Endothelial cell of umbilical vein (primary cell): ENCODE measurements at regions of chr22 and their contacts with region 1.

Region 1: GRCh38 chr22:30386960-30387827 is at the start of gene RNF215:
- DNase-seq: peak; percentile 78
- H3K4me3 ChIP-seq: peak within 1 kb of the TSS; percentile 36 to 70 (median 43)
- H3K27ac ChIP-seq: peak within 1 kb of the TSS; percentile 20
- H3K4me1 ChIP-seq: peaks cover 15% of the 10 kb centered on the region
- H3K27me3 ChIP-seq: no peaks in the 10 kb centered on the region
- CTCF ChIP-seq: peak; percentile 90 to 91
- POLR2A ChIP-seq: no peak
- total RNA-seq, gene RNF215: 24.4 and 26.9 TPM in 2 replicates

Region 2: DNA sequence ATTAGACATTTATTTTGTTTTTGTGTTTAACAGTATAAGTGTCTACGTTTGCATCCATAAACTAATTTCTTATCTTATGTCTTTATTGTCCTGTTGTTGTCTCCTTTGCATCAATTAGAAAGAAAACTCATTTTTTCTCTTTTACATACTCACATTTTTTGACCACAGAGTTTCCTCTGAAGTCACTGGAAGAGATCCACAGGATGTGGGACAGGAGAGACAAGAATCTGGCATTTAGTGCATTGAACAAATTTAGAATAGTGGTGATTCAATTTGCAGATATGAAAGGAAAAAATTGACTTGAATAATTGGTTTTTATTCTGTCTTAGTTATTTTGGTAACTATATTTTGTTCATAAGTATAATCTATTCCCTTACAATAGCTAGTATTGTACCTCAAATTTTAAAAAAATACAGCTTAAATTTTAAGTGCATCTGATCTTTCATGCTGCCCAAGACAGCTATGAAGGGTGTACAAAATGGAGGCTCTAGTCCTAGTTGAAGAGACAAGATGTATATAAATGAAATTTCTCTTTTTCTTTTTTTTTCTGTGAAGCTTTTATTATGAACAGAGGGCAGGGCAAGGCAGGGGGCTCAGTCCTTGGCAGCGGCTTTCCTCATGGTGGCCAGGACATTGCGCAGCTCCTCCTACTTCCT is 282.6 kb before region 1 on chr22:
- CTCF ChIA-PET with region 1: interaction called, 9 read pairs
- POLR2A ChIA-PET with region 1: no interaction called
- dilution Hi-C with region 1: no loop called
- intact Hi-C with region 1: loop called (anchors 2 kb)
- DNase-seq: no peak
- H3K4me3 ChIP-seq: no peak overlapping the region
- H3K27ac ChIP-seq: no peak overlapping the region
- H3K4me1 ChIP-seq: no peaks in the 10 kb centered on the region
- H3K27me3 ChIP-seq: peaks cover 10 to 44% of the 10 kb centered on the region in 2 experiments
- CTCF ChIP-seq: no peak
- POLR2A ChIP-seq: no peak

Region 3: GRCh38 chr22:30167296-30167695 is 219.9 kb before region 1 on chr22:
- CTCF ChIA-PET with region 1: no interaction called
- POLR2A ChIA-PET with region 1: no interaction called
- dilution Hi-C with region 1: no loop called
- intact Hi-C with region 1: no loop called
- DNase-seq: no peak
- H3K4me3 ChIP-seq: no peak overlapping the region
- H3K27ac ChIP-seq: no peak overlapping the region
- H3K4me1 ChIP-seq: no peaks in the 10 kb centered on the region
- H3K27me3 ChIP-seq: peaks cover 38 to 70% of the 10 kb centered on the region in 2 experiments
- CTCF ChIP-seq: no peak
- POLR2A ChIP-seq: no peak

Region 4: DNA sequence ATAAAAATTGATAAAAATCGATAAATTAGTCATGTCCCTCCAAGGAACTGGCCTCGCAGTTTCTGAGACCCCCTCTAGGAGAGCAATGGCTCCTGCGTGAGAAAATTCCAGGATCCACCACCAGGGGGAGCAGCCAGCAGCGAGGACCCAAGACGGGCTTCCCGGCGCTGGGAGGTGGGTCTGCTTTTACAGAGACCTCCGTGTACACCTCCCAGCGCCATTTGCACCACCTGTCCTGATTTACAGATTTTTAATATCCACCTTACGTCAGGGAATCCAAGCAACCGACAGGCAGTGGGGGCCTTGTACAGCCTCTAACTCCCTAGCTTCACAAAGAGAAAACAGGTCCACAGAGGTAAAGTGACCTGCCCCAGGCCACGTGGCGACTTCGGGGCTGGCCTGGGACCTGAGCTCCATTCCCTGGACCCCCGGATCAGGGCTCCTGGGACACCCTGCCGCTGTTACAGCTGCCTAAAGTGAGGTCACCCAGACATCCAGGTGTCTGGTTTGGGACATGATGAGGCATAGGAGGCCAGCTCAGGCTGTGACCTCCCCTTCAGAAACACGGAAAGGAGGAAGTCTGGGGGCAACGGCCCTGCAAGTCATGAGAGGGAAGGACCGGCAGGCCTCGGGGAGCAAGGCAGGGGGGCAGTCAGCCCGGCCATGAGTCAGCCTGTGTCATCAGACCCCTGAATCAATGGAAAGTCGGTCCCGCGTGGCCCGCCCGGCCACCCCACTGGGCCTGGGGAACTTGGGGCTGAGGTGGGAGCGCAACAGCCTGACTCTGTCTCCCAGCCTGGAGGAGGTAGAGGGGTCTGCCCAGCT is 124.1 kb before region 1 on chr22:
- CTCF ChIA-PET with region 1: interaction called, 56 read pairs
- POLR2A ChIA-PET with region 1: no interaction called
- dilution Hi-C with region 1: no loop called
- intact Hi-C with region 1: loop called (anchors 1 kb)
- DNase-seq: peak; percentile 57
- H3K4me3 ChIP-seq: no peak overlapping the region
- H3K27ac ChIP-seq: no peak overlapping the region
- H3K4me1 ChIP-seq: peaks cover 6% of the 10 kb centered on the region
- H3K27me3 ChIP-seq: no peaks in the 10 kb centered on the region
- CTCF ChIP-seq: peak; percentile 82 to 93
- POLR2A ChIP-seq: no peak

Region 5: GRCh38 chr22:30356449-30357235 is 30.6 kb before region 1 on chr22 and contains the starts of genes CCDC157 and SF3A1:
- CTCF ChIA-PET with region 1: interaction called, 15 read pairs
- POLR2A ChIA-PET with region 1: interaction called, 4 read pairs
- dilution Hi-C with region 1: no loop called
- intact Hi-C with region 1: no loop called
- DNase-seq: peak; percentile 95
- H3K4me3 ChIP-seq: peak within 1 kb of the TSS; percentile 64 to 94 (median 84)
- H3K27ac ChIP-seq: peak within 1 kb of the TSS; percentile 81
- H3K4me1 ChIP-seq: peaks cover 15% of the 10 kb centered on the region
- H3K27me3 ChIP-seq: no peaks in the 10 kb centered on the region
- CTCF ChIP-seq: no peak
- POLR2A ChIP-seq: peak; percentile 94
- total RNA-seq, gene CCDC157: 1.7 and 2.1 TPM in 2 replicates
- total RNA-seq, gene SF3A1: 173 and 187 TPM in 2 replicates

Region 6: DNA sequence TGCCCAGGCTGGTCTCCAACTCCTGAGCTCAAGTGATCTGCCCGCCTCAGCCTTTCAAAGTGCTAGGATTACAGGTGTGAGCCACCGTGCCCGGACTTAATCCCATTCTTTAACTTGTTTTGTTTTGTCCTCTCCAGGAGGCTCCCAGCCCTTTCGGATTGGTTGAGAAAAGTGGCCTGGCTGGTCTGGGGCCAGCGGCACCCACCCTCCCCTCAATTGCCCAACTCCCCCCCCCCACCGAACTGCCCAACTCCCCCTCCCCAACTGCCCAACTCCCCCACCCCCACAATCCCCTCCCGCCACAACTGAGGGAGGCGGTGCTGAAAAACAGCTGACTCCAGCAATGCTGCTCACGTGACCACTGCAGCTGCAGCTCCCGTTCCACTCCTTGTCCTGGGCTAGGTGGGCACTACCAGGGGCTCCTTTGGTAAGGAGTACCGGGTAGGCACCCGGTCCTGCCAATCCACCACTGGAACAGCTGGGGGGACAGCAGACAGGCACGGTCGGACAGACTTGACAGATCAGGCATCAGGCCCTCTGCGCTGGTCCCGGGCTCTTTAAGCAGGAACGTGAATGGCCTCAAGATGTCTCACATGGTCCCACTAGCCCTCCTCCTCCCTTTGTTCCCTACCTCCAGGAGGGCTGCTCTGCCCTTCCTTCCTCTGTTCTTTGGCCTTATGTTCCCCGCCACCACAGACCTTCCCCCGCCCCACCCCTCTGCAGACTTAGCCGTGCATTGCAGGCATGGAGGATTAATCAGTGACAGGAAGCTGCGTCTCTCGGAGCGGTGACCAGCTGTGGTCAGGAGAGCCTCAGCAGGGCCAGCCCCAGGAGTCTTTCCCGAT is 219.5 kb after region 1 on chr22 and contains the start of gene TCN2:
- CTCF ChIA-PET with region 1: interaction called, 6 read pairs
- POLR2A ChIA-PET with region 1: no interaction called
- dilution Hi-C with region 1: no loop called
- intact Hi-C with region 1: loop called (anchors 5 kb)
- DNase-seq: peak; percentile 83
- H3K4me3 ChIP-seq: peak within 1 kb of the TSS; percentile 11 to 55 (median 35)
- H3K27ac ChIP-seq: peak within 1 kb of the TSS; percentile 73
- H3K4me1 ChIP-seq: peaks cover 37% of the 10 kb centered on the region
- H3K27me3 ChIP-seq: no peaks in the 10 kb centered on the region
- CTCF ChIP-seq: no peak
- POLR2A ChIP-seq: peak; percentile 84
- total RNA-seq, gene TCN2: 62.3 and 80.6 TPM in 2 replicates